ENCODE measurements at regions of chr1 and their contacts with region 1.

Region 1: DNA sequence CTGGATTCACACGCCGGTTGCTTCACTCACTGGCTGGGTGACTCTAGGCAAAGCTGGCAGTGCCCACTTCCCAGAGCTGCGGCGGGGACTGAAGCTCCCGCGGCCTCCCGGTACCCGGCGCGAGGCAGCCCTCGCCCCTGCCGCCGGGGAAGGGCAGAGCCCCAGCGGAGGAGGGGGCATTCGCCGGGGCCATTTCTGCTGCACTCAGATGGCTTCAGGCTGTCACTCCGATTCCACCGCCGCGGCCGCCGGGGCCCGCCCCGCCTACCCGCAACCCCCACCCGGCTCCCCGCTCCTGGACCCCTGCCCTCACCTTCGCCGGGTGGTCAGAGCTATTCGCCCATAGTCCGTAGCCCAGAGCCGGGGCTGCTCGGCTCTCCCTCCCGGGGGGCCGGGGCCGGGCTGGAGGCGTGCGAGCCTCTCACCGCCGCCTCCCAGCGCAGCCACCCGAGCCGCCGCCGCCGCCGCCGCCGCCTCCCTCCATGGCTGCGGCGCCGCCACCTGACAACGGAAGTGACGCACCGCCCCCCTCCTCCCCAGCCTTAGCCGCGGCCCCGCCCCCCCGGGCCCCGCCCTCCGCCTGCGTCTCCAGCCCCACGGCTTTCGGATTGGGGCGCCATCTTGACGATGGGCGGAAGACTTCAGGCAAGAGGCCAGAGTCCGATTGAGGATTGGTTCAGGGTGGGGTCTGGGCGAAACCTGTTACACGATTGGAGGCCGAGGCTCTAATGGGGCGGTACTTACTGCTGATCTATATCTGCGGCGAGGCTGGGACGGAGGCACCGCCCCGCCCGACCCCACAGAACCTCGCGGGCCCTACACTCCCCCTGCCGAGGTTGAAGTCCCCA is at the start of gene STK40:
- DNase-seq: peak; percentile 99
- ATAC-seq: peak; percentile 94
- H3K4me3 ChIP-seq: peak within 1 kb of the TSS; percentile 81 to 92
- H3K27ac ChIP-seq: peak within 1 kb of the TSS; percentile 83 to 97
- H3K4me1 ChIP-seq: peaks cover 2 to 11% of the 10 kb centered on the region in 2 donors
- H3K27me3 ChIP-seq: no peaks in the 10 kb centered on the region
- total RNA-seq, gene STK40: 63.9 to 95.7 TPM

Region 2: GRCh38 chr1:36203554-36204346 is 181.9 kb before region 1 on chr1:
- intact Hi-C with region 1: no loop called
- DNase-seq: peak; percentile 82 to 83
- ATAC-seq: peak; percentile 75
- H3K4me3 ChIP-seq: no peak overlapping the region
- H3K27ac ChIP-seq: peak overlapping the region; percentile 36 to 94
- H3K4me1 ChIP-seq: peaks cover 0 to 2% of the 10 kb centered on the region in 2 donors
- H3K27me3 ChIP-seq: no peaks in the 10 kb centered on the region

Region 3: GRCh38 chr1:36350659-36351226 is 34.9 kb before region 1 on chr1:
- intact Hi-C with region 1: loop called in 1 of 2 experiments (anchors 5 kb)
- DNase-seq: peak; percentile 81 to 84
- ATAC-seq: peak; percentile 90
- H3K4me3 ChIP-seq: no peak overlapping the region
- H3K27ac ChIP-seq: peak overlapping the region; percentile 64 to 92
- H3K4me1 ChIP-seq: peaks cover 0 to 2% of the 10 kb centered on the region in 2 donors
- H3K27me3 ChIP-seq: no peaks in the 10 kb centered on the region